Activated CD4-positive, alpha-beta memory T cell treated with anti-CD3 and anti-CD28 coated beads for 36 hours (primary cell): ENCODE measurements at regions of chr2 and their contacts with region 1.

Region 1: DNA sequence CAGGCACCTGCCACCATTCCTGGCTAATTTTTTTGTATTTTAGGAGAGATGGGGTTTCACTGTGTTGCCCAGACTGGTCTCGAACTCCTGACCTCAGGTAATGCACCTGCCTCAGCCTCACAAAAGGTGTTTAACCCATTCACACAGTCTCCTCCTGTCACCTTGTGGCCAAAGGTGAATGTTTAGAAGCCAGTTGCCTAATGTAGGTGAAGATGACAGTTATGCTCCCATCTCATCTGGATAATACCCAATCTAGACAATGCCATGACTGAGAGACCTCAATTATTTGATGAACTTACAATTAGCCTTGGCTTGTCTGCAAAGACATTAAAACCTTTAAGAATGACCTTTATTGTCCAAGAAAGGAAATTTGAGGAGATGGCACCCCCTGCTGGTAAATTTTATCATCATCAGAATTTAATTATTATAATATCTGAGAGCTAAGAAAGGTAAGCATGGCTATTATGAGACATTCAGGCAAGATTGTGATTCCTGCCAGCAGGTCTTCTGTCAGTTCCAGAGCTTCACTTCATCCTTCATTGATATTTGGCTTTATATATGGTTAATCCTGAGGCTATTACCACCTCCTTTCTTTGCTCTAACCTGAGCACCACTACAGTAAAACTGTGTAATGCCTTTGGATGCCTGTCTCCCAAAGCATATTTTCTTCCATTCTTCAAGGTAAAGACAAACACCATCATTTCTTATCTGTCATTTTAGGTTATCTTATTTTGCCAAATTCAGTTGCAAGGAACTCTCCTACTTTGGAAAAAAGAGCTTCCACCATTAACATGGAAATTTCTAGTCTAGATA is 117.6 kb downstream of the FAM124B start:
- DNase-seq: no peak
- H3K4me3 Mint-ChIP-seq: no peak overlapping the region
- H3K27ac Mint-ChIP-seq: no peak overlapping the region
- H3K4me1 Mint-ChIP-seq: no peaks in the 10 kb centered on the region
- H3K27me3 Mint-ChIP-seq: peaks cover 21% of the 10 kb centered on the region

Region 2: DNA sequence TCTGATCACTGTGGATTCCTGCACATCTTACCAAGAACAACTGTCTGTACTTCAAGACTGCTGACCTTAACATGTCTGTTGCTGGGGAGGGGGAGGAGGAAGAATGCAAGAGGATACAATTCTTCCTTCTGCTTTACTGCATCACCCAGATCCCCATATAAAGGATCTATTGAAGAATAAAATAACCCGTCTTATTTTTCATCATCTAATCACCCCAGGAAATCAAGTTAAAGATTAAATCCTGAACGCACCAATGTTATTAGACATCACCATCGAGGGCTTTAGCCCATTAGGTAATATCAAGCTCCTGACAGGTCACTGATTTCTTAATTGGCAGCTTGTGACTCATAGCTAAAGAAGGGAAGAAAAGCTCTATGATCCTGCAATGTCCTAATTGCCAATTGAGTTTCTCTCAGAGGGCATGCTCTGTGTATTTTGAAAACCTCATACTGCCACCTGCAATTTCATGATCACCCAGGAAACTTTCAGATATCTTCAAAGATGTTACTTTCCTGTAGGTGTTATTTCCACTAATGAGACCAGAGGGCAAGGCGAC is 1307.7 kb before region 1 on chr2:
- CTCF ChIA-PET with region 1: no interaction called
- POLR2A ChIA-PET with region 1: no interaction called
- intact Hi-C with region 1: loop called (anchors 10 kb)
- DNase-seq: no peak
- H3K4me3 Mint-ChIP-seq: no peak overlapping the region
- H3K27ac Mint-ChIP-seq: no peak overlapping the region
- H3K4me1 Mint-ChIP-seq: no peaks in the 10 kb centered on the region
- H3K27me3 Mint-ChIP-seq: peaks cover 11% of the 10 kb centered on the region

Region 3: GRCh38 chr2:223779877-223780276 is 504.5 kb before region 1 on chr2:
- CTCF ChIA-PET with region 1: no interaction called
- POLR2A ChIA-PET with region 1: no interaction called
- intact Hi-C with region 1: loop called (anchors 5 kb)
- DNase-seq: peak; percentile 66
- H3K4me3 Mint-ChIP-seq: no peak overlapping the region
- H3K27ac Mint-ChIP-seq: no peak overlapping the region
- H3K4me1 Mint-ChIP-seq: no peaks in the 10 kb centered on the region
- H3K27me3 Mint-ChIP-seq: no peaks in the 10 kb centered on the region

Region 4: GRCh38 chr2:223970343-223971128 is 313.8 kb before region 1 on chr2:
- CTCF ChIA-PET with region 1: interaction called, 211 read pairs
- POLR2A ChIA-PET with region 1: interaction called, 3 read pairs
- intact Hi-C with region 1: loop called (anchors 1 kb)
- DNase-seq: peak; percentile 42
- H3K4me3 Mint-ChIP-seq: no peak overlapping the region
- H3K27ac Mint-ChIP-seq: no peak overlapping the region
- H3K4me1 Mint-ChIP-seq: peaks cover 12% of the 10 kb centered on the region
- H3K27me3 Mint-ChIP-seq: no peaks in the 10 kb centered on the region

Region 5: DNA sequence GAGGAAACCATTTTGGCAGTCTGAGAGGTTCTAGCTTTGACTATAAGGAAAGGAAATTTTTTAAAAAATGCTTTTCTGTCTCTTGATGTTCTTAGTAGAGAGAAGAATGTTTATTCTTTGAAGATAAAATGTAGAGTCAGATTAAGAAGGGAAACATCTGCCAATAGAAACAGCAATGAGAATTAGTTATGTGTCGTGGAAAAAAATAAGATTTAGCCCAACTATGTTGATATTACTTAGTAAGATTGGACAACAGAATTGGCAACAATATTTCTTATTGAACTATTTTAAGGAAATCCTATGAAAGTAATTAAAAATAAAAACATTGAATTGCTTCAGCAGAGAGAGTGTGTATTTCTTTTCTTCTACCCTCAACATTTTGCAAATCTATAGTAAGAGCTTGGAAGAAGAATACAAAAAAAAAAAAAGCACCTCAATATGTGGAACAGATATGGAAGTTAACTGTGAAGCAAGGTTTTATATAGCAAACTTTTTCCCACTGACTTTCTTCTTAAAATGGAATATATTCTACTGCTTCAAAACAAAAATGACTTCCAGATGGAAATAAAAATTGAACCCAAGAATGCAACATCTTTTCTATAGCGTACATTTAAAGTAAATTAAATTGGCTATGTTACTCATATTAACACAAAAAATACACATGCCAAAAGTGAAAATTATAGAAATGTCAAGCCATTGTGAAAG is 60.3 kb before region 1 on chr2:
- CTCF ChIA-PET with region 1: no interaction called
- POLR2A ChIA-PET with region 1: no interaction called
- intact Hi-C with region 1: no loop called
- DNase-seq: no peak
- H3K4me3 Mint-ChIP-seq: no peak overlapping the region
- H3K27ac Mint-ChIP-seq: no peak overlapping the region
- H3K4me1 Mint-ChIP-seq: no peaks in the 10 kb centered on the region
- H3K27me3 Mint-ChIP-seq: peaks cover 20% of the 10 kb centered on the region

Region 6: DNA sequence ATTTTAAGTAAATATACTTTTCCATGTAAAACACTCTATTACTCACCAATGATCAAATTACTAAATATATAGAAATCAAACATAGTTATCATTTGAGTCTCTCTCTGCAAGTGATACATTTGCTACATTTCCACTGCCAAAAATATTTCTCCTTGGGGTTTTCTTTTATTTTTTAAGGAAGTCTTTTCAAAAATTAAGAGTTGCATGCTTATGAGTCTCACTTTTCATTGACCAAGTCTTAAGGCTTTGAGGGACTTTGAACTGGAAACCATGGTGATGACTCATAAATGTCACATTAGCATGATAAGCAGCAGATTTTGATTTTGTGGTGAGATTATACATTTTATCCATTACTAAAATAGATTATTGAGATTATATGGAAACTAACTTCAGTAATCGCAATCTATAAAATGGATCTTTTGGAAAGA is 35.4 kb before region 1 on chr2:
- CTCF ChIA-PET with region 1: no interaction called
- POLR2A ChIA-PET with region 1: no interaction called
- intact Hi-C with region 1: no loop called
- DNase-seq: no peak
- H3K4me3 Mint-ChIP-seq: no peak overlapping the region
- H3K27ac Mint-ChIP-seq: no peak overlapping the region
- H3K4me1 Mint-ChIP-seq: no peaks in the 10 kb centered on the region
- H3K27me3 Mint-ChIP-seq: peaks cover 10% of the 10 kb centered on the region

Region 7: DNA sequence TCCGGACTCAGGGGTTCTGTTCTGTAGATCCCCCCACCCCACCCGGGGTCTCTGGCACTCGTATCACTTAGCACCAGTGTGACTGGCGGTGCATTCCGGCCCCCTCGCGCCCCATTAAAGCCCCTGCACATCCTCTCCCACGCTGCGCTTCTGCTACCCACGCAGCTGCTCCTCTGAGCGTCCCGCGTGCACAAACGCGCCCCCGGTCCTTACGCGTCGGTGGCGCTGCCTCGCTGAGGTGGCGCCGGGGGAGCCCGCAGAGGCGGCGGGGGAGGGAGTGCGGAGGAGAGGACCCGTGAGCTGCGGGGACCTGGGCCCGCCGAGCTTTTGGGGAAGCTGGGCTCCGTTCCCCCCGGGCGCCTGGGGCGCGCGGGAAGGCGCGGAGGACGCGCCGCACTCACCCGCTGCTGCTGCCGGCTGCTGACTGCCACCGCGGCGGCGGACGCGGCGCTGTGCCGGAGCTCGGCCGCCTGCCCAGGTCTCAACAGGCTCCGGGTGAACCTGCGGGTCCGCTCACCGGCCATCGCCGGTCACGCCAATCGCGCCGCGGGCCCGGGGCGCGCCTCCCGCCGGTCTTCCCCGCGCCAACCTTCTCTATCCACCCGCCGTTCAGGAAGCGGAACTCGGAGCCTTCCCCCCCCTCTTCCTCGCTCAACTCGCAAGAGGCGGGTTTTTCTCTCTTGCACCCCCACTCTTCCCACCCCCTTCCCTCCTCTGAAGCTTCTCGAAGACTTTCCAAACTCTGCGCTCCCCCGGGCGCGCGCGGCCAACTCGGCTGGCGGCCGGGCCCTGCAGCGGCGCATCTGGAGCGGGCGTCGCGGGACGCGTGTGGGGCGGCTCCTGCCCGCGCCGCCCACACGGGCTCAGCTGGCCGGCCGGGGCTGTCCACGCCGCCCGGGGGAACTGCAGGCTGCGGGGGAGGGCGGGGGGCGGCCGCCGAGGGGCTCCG is 757.8 kb after region 1 on chr2 and contains the start of gene DOCK10:
- CTCF ChIA-PET with region 1: no interaction called
- POLR2A ChIA-PET with region 1: no interaction called
- intact Hi-C with region 1: no loop called
- DNase-seq: peak; percentile 67
- H3K4me3 Mint-ChIP-seq: peak within 1 kb of the TSS; percentile 88
- H3K27ac Mint-ChIP-seq: peak within 1 kb of the TSS; percentile 96
- H3K4me1 Mint-ChIP-seq: peaks cover 44% of the 10 kb centered on the region
- H3K27me3 Mint-ChIP-seq: no peaks in the 10 kb centered on the region
- total RNA-seq, gene DOCK10: 134 to 139 TPM